Activated CD4-positive, alpha-beta memory T cell treated with anti-CD3 and anti-CD28 coated beads for 36 hours (primary cell): ENCODE measurements at regions of chrX and their contacts with region 1.

Region 1: DNA sequence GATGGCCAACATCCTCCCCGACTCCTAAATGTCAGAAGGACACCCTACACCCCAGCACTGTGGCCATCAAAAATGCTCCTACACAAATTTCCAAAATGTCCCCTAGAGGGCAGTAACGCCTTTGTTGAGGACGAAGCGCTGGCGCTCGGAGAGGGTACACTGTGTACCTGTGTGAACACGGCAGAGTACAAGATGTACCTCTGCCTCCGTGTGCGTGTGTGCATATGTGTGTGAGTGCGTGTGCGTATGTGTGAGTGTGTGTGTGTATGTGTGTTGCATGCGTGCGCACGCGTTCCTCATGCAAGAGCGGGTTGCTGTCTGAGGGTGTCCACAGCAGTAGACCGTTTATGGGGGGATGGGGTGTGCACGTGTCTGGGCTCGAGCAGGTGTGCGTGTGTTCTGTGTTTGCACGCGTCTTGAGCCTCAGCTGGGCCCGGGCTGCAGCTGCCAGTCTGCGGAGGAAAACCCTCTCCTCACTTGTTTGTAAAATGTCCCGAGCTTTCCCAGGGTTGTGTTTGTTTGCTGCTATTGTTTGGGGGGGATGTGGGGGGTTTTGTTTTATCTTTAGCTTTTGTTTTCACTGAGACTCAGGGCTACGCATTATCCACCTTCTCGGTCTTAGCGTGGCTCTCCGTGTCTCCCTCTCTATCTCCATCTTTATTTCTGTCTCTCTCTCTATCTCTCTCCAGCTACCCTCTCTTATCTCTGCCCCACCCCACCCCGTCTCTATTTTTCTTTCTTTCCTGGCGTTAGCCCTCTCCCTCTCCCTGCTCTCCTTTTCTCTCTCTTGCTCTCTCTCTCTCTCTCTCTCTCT is 10.4 kb upstream of the TSPYL2 start:
- DNase-seq: peak; percentile 73
- H3K4me3 Mint-ChIP-seq: peak overlapping the region; percentile 82
- H3K27ac Mint-ChIP-seq: peak overlapping the region; percentile 69
- H3K4me1 Mint-ChIP-seq: peaks cover 13% of the 10 kb centered on the region
- H3K27me3 Mint-ChIP-seq: peaks cover 1% of the 10 kb centered on the region

Region 2: GRCh38 chrX:53081925-53082772 is 10.3 kb after region 1 on chrX and contains the start of gene TSPYL2:
- CTCF ChIA-PET with region 1: interaction called, 4 read pairs
- POLR2A ChIA-PET with region 1: interaction called, 17 read pairs
- intact Hi-C with region 1: no loop called
- DNase-seq: peak; percentile 95
- H3K4me3 Mint-ChIP-seq: peak within 1 kb of the TSS; percentile 90
- H3K27ac Mint-ChIP-seq: peak within 1 kb of the TSS; percentile 95
- H3K4me1 Mint-ChIP-seq: peaks cover 47% of the 10 kb centered on the region
- H3K27me3 Mint-ChIP-seq: no peaks in the 10 kb centered on the region
- total RNA-seq, gene TSPYL2: 70.6 to 72.8 TPM

Region 3: DNA sequence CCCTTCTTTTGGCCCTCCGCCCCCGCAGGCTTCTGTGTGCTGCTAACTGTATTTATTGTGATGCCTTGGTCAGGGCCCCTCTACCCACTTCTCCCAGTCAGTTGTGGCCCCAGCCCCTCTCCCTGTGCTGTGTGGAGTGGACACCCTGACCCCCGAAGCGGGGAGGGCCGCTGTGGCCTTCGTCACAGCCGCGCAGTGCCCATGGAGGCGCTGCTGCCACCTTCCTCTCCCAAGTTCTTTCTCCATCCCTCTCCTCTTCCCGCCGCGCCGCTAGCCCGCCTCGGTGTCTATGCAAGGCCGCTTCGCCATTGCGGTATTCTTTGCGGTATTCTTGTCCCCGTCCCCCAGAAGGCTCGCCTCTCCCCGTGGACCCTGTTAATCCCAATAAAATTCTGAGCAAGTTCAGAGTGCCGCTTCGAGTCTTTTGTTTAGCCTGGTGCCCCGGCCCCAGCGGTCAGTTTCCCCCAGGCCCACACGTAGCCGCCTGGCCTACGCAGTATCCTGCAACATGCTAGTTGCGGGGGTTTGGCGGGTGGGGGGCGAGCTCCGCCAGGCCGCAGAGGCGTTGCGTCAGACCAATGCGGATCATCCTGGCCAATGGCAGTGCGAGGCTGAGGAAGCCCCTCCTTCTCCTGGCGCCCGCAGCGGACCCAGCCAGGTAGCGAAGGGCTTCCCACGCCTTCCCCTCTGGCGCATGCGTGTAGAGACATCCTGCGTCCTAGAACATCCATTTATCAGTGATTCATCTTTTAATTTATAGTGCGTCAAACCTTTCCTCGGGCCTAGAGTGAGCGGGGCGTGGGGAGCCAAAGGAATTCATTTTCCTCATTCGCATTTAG is 16.5 kb after region 1 on chrX:
- CTCF ChIA-PET with region 1: interaction called, 12 read pairs
- POLR2A ChIA-PET with region 1: interaction called, 17 read pairs
- intact Hi-C with region 1: loop called (anchors 1 kb)
- DNase-seq: peak; percentile 87
- H3K4me3 Mint-ChIP-seq: peak overlapping the region; percentile 80
- H3K27ac Mint-ChIP-seq: peak overlapping the region; percentile 93
- H3K4me1 Mint-ChIP-seq: peaks cover 62% of the 10 kb centered on the region
- H3K27me3 Mint-ChIP-seq: no peaks in the 10 kb centered on the region